ENCODE measurements at regions of chr6 and their contacts with region 1.

Region 1: DNA sequence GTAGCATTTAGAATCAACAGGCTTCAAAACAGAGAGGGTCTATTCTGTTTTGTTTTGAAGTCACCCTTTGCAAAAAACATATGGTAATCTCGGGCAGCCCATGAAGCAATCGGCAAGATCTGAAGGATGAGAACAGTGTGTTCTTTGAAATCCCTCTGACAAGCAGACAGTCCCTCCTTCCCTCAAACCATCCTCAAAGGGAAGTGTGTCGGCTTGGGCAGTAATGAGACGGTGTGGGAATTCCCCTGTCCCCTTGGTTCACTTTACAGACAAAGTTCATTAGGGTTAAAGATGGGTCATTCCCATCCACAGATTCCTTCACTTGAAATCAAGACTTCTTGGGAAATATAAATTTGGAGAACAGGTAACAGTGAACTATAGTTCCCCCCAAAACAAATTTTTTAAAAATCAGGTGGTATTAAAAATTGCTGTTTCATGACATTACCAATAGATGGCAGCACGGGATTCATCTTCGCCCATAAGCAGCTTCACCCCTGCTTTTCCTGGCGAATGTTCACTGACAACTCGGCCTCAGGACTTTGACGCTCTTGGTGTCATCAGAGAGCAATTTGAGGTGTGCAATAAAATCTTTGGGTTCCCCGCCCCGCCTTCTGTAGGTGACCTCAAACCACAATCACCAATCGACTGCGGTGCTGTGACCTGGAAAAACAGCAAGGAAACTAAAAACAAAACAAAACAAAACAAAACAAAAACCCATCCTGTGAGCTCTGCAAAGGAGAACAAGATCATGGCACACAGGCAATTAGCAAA is 159.3 kb upstream of the TNFAIP3 start:
- DNase-seq: peak in 1 of 2 donors; percentile 79
- H3K4me3 ChIP-seq: no peak overlapping the region
- H3K27ac ChIP-seq: no peak overlapping the region
- H3K4me1 ChIP-seq: peaks cover 0 to 3% of the 10 kb centered on the region in 2 donors
- H3K27me3 ChIP-seq: no peaks in the 10 kb centered on the region
- CTCF ChIP-seq: peak; percentile 52 to 73 (median 56)

Region 2: GRCh38 chr6:137944793-137945498 is 237.2 kb after region 1 on chr6:
- intact Hi-C with region 1: loop called (anchors 2 kb)
- DNase-seq: no peak
- H3K4me3 ChIP-seq: no peak overlapping the region
- H3K27ac ChIP-seq: no peak overlapping the region
- H3K4me1 ChIP-seq: no peaks in the 10 kb centered on the region
- H3K27me3 ChIP-seq: no peaks in the 10 kb centered on the region
- CTCF ChIP-seq: peak; percentile 59 to 73 (median 72)

Region 3: GRCh38 chr6:138001750-138002349 is 294.1 kb after region 1 on chr6:
- intact Hi-C with region 1: loop called (anchors 10 kb)
- DNase-seq: peak in 1 of 2 donors; percentile 69
- H3K4me3 ChIP-seq: no peak overlapping the region
- H3K27ac ChIP-seq: no peak overlapping the region
- H3K4me1 ChIP-seq: no peaks in the 10 kb centered on the region
- H3K27me3 ChIP-seq: no peaks in the 10 kb centered on the region
- CTCF ChIP-seq: peak; percentile 49 to 86 (median 74)

Measured in ascending aorta (tissue), 2 donors.